ENCODE measurements at regions of chr21 and their contacts with region 1.

Region 1: DNA sequence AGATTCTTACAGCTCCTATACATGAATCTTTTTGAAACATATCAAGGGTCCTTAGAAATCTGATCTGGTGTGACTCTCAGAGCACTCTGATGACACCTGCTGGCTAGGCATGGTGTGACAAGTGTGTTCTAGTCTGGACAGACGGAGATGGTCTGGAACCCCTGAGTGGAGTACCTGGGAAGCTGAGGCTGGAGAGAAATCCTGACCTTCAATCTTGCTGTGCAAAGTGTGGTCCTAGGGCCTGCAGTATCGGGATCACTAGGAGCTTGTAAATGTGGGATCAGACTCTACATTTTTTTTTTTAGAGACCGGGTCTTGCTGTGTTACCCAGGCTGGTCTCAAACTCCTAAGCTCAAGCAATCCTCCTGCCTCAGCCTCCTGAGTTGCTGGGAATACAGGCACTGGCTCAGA is 78.6 kb upstream of the SOD1 start:
- DNase-seq: peak; percentile 68
- H3K4me3 ChIP-seq: no peak overlapping the region; a peak in 1 of 4 replicates
- H3K27ac ChIP-seq: no peak overlapping the region
- H3K4me1 ChIP-seq: no peaks in the 10 kb centered on the region
- H3K27me3 ChIP-seq: no peaks in the 10 kb centered on the region
- CTCF ChIP-seq: peak; percentile 83
- EP300 ChIP-seq: no peak
- RAD21 ChIP-seq: peak; percentile 91

Region 2: GRCh38 chr21:31107871-31108270 is 473.0 kb before region 1 on chr21:
- CTCF ChIA-PET with region 1: interaction called, 10 read pairs
- POLR2A ChIA-PET with region 1: no interaction called
- DNase-seq: no peak
- H3K4me3 ChIP-seq: no peak overlapping the region
- H3K27ac ChIP-seq: no peak overlapping the region
- H3K4me1 ChIP-seq: peaks cover 0 to 2% of the 10 kb centered on the region in 2 experiments; a peak in 1 of 4 replicates
- H3K27me3 ChIP-seq: no peaks in the 10 kb centered on the region
- CTCF ChIP-seq: no peak
- EP300 ChIP-seq: no peak
- RAD21 ChIP-seq: no peak

Region 3: GRCh38 chr21:31198575-31198974 is 382.3 kb before region 1 on chr21:
- CTCF ChIA-PET with region 1: interaction called, 169 read pairs
- POLR2A ChIA-PET with region 1: no interaction called
- DNase-seq: peak; percentile 55
- H3K4me3 ChIP-seq: no peak overlapping the region; a peak in 1 of 4 replicates
- H3K27ac ChIP-seq: no peak overlapping the region
- H3K4me1 ChIP-seq: peaks cover 0 to 7% of the 10 kb centered on the region in 2 experiments; a peak in 2 of 4 replicates
- H3K27me3 ChIP-seq: no peaks in the 10 kb centered on the region
- CTCF ChIP-seq: peak; percentile 83
- EP300 ChIP-seq: no peak
- RAD21 ChIP-seq: peak; percentile 87

Region 4: DNA sequence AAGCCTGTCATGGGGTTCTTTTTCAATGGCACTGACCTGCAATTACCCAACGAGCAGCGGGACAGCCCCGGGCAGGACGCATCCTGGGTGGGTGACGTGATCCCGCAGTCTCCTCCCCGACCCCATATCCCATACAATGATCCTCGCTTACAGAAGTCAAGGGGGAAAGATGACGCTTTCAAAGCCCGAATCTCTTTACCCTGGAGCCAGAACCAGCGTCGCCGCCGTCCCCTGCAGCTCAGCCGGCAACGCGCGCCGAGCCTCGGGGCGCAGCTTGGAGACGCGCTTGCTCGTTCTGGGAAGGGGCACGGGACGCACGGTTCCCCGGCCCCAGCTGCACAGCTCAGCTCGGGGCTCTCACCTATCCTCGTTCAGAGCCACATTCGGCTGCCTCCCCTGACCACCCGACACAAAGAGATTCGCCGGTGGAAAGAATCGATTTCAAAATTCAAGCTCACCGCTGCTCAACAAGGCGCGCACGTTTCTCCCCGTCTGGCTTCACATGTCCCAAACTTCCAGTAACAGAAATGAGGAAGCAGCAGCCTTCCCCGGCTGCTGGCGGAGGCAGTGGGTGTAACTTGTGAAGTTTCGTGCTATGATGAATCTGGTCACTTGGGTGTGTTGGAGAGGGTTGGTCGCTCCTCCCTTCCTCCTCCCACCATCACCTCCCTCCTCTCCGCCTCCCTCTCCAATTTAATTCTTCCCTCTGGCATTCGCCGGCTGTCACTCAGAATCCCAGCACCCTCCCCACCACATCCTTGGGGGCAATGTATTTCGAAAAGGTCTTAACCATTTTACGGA is 237.0 kb before region 1 on chr21 and contains the start of gene TIAM1:
- CTCF ChIA-PET with region 1: interaction called, 25 read pairs
- POLR2A ChIA-PET with region 1: no interaction called
- DNase-seq: peak; percentile 64
- H3K4me3 ChIP-seq: peak within 1 kb of the TSS; percentile 55 to 56
- H3K27ac ChIP-seq: no peak within 1 kb of the TSS
- H3K4me1 ChIP-seq: peaks cover 0 to 13% of the 10 kb centered on the region in 2 experiments; a peak in 1 of 4 replicates
- H3K27me3 ChIP-seq: peaks cover 21% of the 10 kb centered on the region; the same call in 1 of the 2 replicates
- CTCF ChIP-seq: no peak
- EP300 ChIP-seq: no peak
- RAD21 ChIP-seq: no peak
- polyA plus RNA-seq, gene TIAM1: 1.7 and 2.4 TPM in 2 replicates

Region 5: GRCh38 chr21:31470896-31471694 is 109.8 kb before region 1 on chr21:
- CTCF ChIA-PET with region 1: no interaction called
- POLR2A ChIA-PET with region 1: no interaction called
- DNase-seq: no peak
- H3K4me3 ChIP-seq: no peak overlapping the region
- H3K27ac ChIP-seq: no peak overlapping the region
- H3K4me1 ChIP-seq: no peaks in the 10 kb centered on the region
- H3K27me3 ChIP-seq: no peaks in the 10 kb centered on the region
- CTCF ChIP-seq: no peak
- EP300 ChIP-seq: no peak
- RAD21 ChIP-seq: no peak

Region 6: DNA sequence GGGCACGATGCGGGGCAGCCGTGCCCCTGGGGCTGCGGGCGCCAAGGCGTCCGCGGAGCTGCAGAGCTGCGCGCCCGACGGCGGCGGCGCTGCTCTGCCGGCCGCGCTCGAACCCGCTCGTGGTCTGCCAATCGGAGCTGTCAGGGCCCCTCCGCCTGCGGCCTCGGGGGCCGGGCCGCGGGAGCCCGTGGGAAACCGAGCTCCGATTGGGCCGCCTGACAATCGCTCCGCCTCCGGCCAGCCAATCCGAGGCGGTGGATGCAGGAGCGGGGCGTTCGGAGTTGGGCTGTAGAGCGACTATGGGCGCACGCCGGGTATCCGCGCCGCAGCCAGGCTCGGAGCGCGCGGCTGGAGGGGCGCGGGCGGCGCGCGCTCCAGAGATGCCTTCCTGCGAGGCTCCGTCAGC is 21.9 kb before region 1 on chr21:
- CTCF ChIA-PET with region 1: interaction called, 39 read pairs
- POLR2A ChIA-PET with region 1: no interaction called
- DNase-seq: peak; percentile 97
- H3K4me3 ChIP-seq: peak overlapping the region; percentile 83 to 89
- H3K27ac ChIP-seq: peak overlapping the region in 1 of 2 experiments; percentile 75; a peak in 2 of 4 replicates
- H3K4me1 ChIP-seq: peaks cover 0 to 13% of the 10 kb centered on the region in 2 experiments; a peak in 1 of 4 replicates
- H3K27me3 ChIP-seq: peaks cover 15% of the 10 kb centered on the region
- CTCF ChIP-seq: peak; percentile 25; the same call in 1 of the 2 replicates
- EP300 ChIP-seq: no peak
- RAD21 ChIP-seq: no peak

Region 7: GRCh38 chr21:31604591-31605190 is 23.8 kb after region 1 on chr21:
- CTCF ChIA-PET with region 1: interaction called, 22 read pairs
- POLR2A ChIA-PET with region 1: no interaction called
- DNase-seq: peak; percentile 70
- H3K4me3 ChIP-seq: peak overlapping the region in 1 of 2 experiments; percentile 30; a peak in 1 of 4 replicates
- H3K27ac ChIP-seq: no peak overlapping the region
- H3K4me1 ChIP-seq: no peaks in the 10 kb centered on the region
- H3K27me3 ChIP-seq: no peaks in the 10 kb centered on the region; the same call in 1 of the 2 replicates
- CTCF ChIP-seq: peak; percentile 91
- EP300 ChIP-seq: no peak
- RAD21 ChIP-seq: peak; percentile 94

Region 8: DNA sequence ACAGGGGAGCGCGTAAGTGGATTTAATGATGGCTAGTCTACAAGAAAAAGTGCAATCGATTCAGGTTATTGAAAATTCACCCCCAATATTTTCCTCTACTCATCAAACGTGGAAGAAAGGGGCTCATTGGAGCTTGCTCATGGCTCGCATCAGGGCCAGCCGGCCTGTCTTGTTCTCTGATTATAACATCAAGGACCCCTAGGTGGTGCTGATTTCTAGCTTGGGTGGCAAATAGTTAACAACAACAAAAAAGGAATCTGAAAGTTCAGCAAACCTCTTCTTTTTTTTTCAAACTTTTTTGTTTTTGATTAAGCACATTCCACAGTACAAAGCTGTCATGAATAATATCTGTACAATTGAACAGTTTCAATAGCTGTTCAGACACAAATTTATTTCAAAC is 42.8 kb after region 1 on chr21:
- CTCF ChIA-PET with region 1: no interaction called
- POLR2A ChIA-PET with region 1: no interaction called
- DNase-seq: no peak
- H3K4me3 ChIP-seq: no peak overlapping the region
- H3K27ac ChIP-seq: no peak overlapping the region
- H3K4me1 ChIP-seq: no peaks in the 10 kb centered on the region
- H3K27me3 ChIP-seq: no peaks in the 10 kb centered on the region
- CTCF ChIP-seq: peak; percentile 34
- EP300 ChIP-seq: no peak
- RAD21 ChIP-seq: no peak; the same call in 1 of the 2 replicates

Measured in SK-N-SH (cell line).